ENCODE measurements at regions of chr3 and their contacts with region 1.

Region 1: GRCh38 chr3:57157545-57157944 is 7.6 kb downstream of the IL17RD start:
- DNase-seq: no peak
- H3K4me3 ChIP-seq: no peak overlapping the region
- H3K27ac ChIP-seq: no peak overlapping the region
- H3K4me1 ChIP-seq: peaks cover 41% of the 10 kb centered on the region
- H3K27me3 ChIP-seq: no peaks in the 10 kb centered on the region
- CTCF ChIP-seq: no peak

Region 2: GRCh38 chr3:57199895-57200297 is 42.4 kb after region 1 on chr3 and contains the start of gene HESX1:
- CTCF ChIA-PET with region 1: no interaction called
- POLR2A ChIA-PET with region 1: interaction called, 13 read pairs
- intact Hi-C with region 1: no loop called
- DNase-seq: no peak
- H3K4me3 ChIP-seq: no peak within 1 kb of the TSS
- H3K27ac ChIP-seq: no peak within 1 kb of the TSS
- H3K4me1 ChIP-seq: no peaks in the 10 kb centered on the region
- H3K27me3 ChIP-seq: no peaks in the 10 kb centered on the region
- CTCF ChIP-seq: no peak
- total RNA-seq, gene HESX1: not detected in 2 replicates

Region 3: GRCh38 chr3:57530071-57530608 is 372.6 kb after region 1 on chr3:
- CTCF ChIA-PET with region 1: no interaction called
- POLR2A ChIA-PET with region 1: no interaction called
- intact Hi-C with region 1: no loop called
- DNase-seq: no peak
- H3K4me3 ChIP-seq: no peak overlapping the region
- H3K27ac ChIP-seq: no peak overlapping the region
- H3K4me1 ChIP-seq: no peaks in the 10 kb centered on the region
- H3K27me3 ChIP-seq: no peaks in the 10 kb centered on the region
- CTCF ChIP-seq: no peak